ENCODE measurements at regions of chr18 and their contacts with region 1.

Region 1: DNA sequence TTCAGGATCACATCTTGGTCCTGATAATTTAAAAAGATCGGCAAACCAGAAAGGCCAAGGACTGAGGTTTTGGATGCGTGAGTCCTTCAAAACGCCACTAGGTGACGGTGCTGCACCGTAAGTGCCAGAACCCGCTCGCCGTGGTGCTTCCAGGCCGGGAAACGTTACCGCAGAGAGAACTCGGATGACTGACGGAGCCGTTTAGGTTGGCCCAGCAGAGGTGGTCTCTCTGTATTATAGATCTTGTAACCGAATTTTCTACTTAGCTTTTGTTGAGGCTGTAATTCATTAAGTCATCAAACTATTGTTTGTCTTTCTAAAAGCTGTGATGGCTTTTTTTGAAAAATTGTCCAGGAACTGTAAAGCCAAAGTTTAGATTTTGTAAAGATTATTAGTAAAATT is 39.8 kb upstream of the ADCYAP1 start:
- DNase-seq: peak; percentile 73
- ATAC-seq: peak; percentile 99
- H3K4me3 ChIP-seq: no peak overlapping the region
- H3K27ac ChIP-seq: no peak overlapping the region
- H3K4me1 ChIP-seq: peaks cover 0 to 5% of the 10 kb centered on the region in 2 experiments; a peak in 2 of 4 replicates
- H3K27me3 ChIP-seq: no peaks in the 10 kb centered on the region
- CTCF ChIP-seq: peak; percentile 81 to 99 (median 98)
- POLR2A ChIP-seq: no peak
- RAD21 ChIP-seq: peak; percentile 96

Region 2: GRCh38 chr18:961644-962355 is 96.9 kb after region 1 on chr18:
- CTCF ChIA-PET with region 1: interaction called, 5 read pairs
- POLR2A ChIA-PET with region 1: no interaction called
- RAD21 ChIA-PET with region 1: no interaction called
- intact Hi-C with region 1: loop called (anchors 2 kb)
- DNase-seq: peak; percentile 32
- ATAC-seq: peak; percentile 59
- H3K4me3 ChIP-seq: peak overlapping the region; percentile 36 to 49
- H3K27ac ChIP-seq: no peak overlapping the region
- H3K4me1 ChIP-seq: peaks cover 0 to 5% of the 10 kb centered on the region in 2 experiments; a peak in 1 of 4 replicates
- H3K27me3 ChIP-seq: peaks cover 21% of the 10 kb centered on the region
- CTCF ChIP-seq: peak; percentile 48 to 93 (median 88); a peak in 5 of 6 replicates
- POLR2A ChIP-seq: no peak
- RAD21 ChIP-seq: peak; percentile 53

Region 3: DNA sequence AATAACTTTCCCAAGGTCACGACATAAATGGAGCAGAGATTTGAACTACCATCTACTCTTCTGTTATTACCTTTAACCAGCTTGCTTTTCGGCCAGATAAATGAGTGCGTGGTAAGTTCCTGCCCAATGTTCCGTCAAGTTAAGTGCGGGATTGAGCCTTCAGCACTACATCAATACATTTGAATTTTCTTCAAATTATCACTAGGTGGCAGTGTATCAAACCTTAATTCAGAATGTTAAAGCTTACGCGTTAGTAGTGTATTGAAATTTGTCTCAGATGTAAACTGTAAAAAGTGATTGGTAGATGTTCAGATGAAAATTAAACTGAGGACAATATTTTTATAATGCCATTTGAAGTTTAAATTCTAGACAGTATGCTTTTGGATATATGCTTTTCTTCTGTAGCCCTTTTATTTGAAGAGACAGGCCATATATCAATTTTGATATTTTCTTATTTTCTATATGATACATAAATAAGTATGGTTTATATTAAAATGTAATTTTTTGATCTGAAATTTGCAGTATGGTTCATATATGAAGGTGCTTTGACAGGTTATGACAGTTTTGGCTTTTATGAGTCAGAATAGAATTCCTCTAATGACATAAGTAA is 721.1 kb after region 1 on chr18:
- CTCF ChIA-PET with region 1: no interaction called
- POLR2A ChIA-PET with region 1: no interaction called
- RAD21 ChIA-PET with region 1: no interaction called
- intact Hi-C with region 1: loop called (anchors 10 kb)
- DNase-seq: peak; percentile 32
- ATAC-seq: peak; percentile 78
- H3K4me3 ChIP-seq: no peak overlapping the region
- H3K27ac ChIP-seq: no peak overlapping the region
- H3K4me1 ChIP-seq: no peaks in the 10 kb centered on the region
- H3K27me3 ChIP-seq: 0 out of 2 replicates have a peak, but pooled peaks cover 6% of the 10 kb centered on the region
- CTCF ChIP-seq: peak; percentile 24 to 62 (median 34); a peak in 4 of 6 replicates
- POLR2A ChIP-seq: no peak
- RAD21 ChIP-seq: peak; percentile 48

Region 4: DNA sequence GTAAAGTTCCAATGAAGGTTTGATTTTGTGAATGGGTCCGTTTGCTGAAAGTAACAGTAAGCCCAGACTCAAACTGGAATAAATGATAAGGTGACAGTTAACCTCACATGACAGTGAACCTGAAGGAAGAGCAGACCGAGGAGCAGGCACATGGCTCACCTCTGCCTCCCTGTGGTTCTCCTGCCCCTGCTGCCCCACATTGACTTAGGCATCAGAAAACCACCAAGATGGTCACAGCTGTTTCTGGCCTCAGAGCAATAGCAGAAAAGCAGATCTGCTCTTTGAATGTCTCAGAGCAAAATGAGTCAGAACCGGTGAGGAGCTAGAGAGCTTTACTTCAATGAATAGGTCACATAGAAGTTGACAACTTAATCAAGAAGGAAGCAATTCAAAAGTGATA is 1218.8 kb after region 1 on chr18:
- CTCF ChIA-PET with region 1: no interaction called
- POLR2A ChIA-PET with region 1: no interaction called
- RAD21 ChIA-PET with region 1: no interaction called
- intact Hi-C with region 1: loop called (anchors 2 kb)
- DNase-seq: no peak
- ATAC-seq: peak; percentile 71
- H3K4me3 ChIP-seq: no peak overlapping the region
- H3K27ac ChIP-seq: no peak overlapping the region
- H3K4me1 ChIP-seq: no peaks in the 10 kb centered on the region
- H3K27me3 ChIP-seq: no peaks in the 10 kb centered on the region
- CTCF ChIP-seq: peak; percentile 34 to 60 (median 56); a peak in 4 of 6 replicates
- POLR2A ChIP-seq: no peak
- RAD21 ChIP-seq: peak; percentile 67

Region 5: DNA sequence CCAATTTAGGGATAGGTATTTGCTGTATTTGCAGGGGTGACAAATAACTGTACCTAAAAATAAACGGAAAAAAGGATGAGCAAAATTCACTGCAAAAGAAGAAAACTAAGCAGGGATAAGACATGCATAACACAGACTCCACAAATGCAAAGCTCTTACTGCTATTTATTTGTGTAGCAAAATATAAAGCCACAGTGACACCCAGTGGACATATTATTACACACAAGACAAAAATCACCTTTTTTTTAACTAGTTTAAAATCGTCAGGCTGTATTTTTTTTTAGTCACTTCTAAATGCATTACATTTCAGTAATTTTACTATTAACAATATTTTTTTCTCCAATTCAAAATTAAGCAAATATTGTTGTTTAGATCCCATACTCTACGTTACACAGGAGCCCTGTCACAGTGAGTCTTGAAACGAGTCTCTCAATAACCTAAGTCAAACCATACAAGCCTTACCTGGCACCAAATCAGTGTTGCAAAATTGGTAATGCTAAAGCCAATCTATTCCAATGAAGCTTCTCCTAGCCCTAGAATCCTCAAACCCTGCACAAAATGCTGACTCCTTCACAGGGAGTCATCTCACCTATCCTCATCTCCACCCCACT is 1682.7 kb after region 1 on chr18:
- CTCF ChIA-PET with region 1: interaction called, 6 read pairs
- POLR2A ChIA-PET with region 1: no interaction called
- RAD21 ChIA-PET with region 1: no interaction called
- intact Hi-C with region 1: loop called (anchors 2 kb)
- DNase-seq: peak; percentile 22
- ATAC-seq: no peak
- H3K4me3 ChIP-seq: no peak overlapping the region
- H3K27ac ChIP-seq: no peak overlapping the region
- H3K4me1 ChIP-seq: no peaks in the 10 kb centered on the region
- H3K27me3 ChIP-seq: no peaks in the 10 kb centered on the region
- CTCF ChIP-seq: peak; percentile 34 to 62 (median 34); a peak in 4 of 6 replicates
- POLR2A ChIP-seq: no peak
- RAD21 ChIP-seq: peak; percentile 61